MCF 10A (cell line): ENCODE measurements at regions of chr5 and their contacts with region 1.

Region 1: DNA sequence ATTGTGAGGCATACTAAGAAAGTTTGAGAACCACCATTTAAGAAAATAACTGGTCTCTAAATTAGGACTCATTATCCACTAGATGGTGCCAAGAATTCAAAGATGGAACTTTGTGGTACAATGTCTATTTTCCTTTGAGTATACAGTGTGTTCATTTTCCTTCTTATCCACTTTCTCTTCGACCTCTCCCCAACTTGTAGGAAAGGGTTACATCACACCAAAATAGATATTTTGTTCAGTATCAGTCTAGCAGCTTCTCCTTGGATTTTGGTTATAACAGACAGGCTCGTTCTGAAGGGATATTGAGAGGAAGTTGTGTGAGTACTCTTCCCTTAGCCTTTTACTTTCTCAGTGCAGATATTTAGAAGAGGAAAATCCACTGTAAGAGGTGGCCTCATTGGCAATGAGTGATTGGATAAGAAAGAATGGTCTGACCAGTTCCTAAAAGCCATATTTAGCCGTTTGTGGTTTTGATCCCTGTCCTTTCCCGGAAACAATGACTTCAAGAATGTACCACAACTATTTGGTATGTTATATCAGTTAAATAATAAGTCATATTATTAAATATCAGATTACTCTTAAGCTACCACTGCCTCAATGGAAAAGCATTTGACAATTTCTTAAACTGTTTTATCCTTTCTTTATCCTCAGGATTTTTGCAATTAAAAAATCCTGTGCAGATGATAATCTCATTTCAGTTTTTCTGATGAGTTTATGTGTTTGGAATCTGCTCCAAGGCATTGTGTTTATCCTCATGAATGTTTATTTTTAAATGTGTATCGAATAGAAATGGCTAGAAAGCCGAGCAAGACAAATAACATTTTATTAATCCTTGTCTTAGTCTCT is 69.0 kb upstream of the GRAMD2B start:
- DNase-seq: peak; percentile 90
- H3K4me3 Mint-ChIP-seq: peak overlapping the region; percentile 57
- H3K27ac Mint-ChIP-seq: peak overlapping the region; percentile 89
- H3K4me1 Mint-ChIP-seq: peaks cover 29% of the 10 kb centered on the region
- H3K27me3 Mint-ChIP-seq: no peaks in the 10 kb centered on the region
- CTCF ChIP-seq: peak; percentile 84

Region 2: DNA sequence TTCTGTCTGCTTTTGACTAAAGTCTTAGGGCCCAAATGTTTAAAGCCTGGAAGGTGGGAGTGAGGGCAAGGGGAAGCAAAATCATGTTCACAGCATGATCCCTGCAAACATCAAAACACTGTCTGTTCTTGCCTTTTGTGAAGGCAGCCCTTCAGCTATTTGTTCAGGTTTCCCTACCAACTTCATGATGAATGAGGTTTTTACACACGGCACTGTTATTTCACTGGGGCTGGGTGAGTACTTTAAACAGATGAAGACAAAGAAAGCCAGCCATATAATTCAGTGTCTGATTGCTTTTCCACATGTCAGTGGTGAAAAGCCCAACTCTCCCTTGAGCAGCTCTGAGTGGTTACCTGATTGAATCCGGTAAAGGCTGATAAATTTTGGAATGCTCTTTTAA is 155.7 kb before region 1 on chr5:
- CTCF ChIA-PET with region 1: no interaction called
- POLR2A ChIA-PET with region 1: no interaction called
- intact Hi-C with region 1: no loop called
- DNase-seq: no peak
- H3K4me3 Mint-ChIP-seq: no peak overlapping the region
- H3K27ac Mint-ChIP-seq: no peak overlapping the region
- H3K4me1 Mint-ChIP-seq: no peaks in the 10 kb centered on the region
- H3K27me3 Mint-ChIP-seq: no peaks in the 10 kb centered on the region
- CTCF ChIP-seq: no peak

Region 3: DNA sequence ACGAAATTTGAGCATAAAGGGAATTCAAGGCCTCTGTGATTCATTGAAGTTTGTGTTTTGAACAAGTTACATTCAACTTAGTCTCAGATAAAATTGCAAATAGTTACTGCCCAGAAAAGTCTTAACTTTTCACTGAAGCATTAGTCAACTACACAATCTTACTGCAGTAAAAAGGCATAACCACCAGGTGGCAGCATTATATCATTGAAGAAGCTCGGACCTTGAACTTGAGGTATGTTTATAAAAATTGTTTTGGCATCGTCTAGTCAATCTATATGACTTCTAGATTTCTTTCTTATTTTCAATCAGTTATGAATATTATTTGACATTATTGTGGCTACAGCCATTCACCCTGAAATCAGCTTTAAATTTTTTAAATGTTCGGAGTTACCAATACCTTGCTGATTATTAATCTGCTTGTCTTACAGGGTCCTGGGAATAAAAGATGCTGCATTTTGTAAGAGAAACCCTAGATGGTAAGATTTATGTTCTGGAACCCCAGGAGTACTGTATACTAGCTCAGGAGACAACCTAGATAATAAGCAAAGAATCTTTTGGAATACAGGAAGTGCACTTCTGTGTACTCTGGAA is 14.9 kb before region 1 on chr5:
- CTCF ChIA-PET with region 1: interaction called, 62 read pairs
- POLR2A ChIA-PET with region 1: interaction called, 4 read pairs
- intact Hi-C with region 1: no loop called
- DNase-seq: peak; percentile 86
- H3K4me3 Mint-ChIP-seq: no peak overlapping the region
- H3K27ac Mint-ChIP-seq: no peak overlapping the region
- H3K4me1 Mint-ChIP-seq: peaks cover 5% of the 10 kb centered on the region
- H3K27me3 Mint-ChIP-seq: no peaks in the 10 kb centered on the region
- CTCF ChIP-seq: peak; percentile 85

Region 4: DNA sequence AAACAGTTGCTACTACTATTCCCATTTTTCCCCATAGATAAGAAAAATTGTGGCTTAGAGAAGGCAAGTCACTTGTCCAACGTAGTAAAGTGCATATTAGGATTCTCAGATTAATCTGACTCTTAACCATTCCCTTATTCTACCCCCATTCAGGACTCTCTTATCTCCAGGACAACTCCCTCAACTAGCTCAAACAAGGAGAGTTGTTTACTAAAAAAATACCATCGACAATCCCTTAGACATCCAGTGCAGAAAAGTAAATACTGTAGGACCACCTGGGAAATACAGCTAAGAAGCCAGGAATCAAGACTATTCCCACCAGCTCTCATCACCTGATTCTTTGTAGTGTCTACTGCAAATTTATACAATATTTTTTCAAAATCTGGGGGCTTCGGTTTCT is 59.6 kb after region 1 on chr5:
- CTCF ChIA-PET with region 1: no interaction called
- POLR2A ChIA-PET with region 1: no interaction called
- intact Hi-C with region 1: no loop called
- DNase-seq: no peak
- H3K4me3 Mint-ChIP-seq: no peak overlapping the region
- H3K27ac Mint-ChIP-seq: no peak overlapping the region
- H3K4me1 Mint-ChIP-seq: peaks cover 9% of the 10 kb centered on the region
- H3K27me3 Mint-ChIP-seq: no peaks in the 10 kb centered on the region
- CTCF ChIP-seq: no peak

Region 5: DNA sequence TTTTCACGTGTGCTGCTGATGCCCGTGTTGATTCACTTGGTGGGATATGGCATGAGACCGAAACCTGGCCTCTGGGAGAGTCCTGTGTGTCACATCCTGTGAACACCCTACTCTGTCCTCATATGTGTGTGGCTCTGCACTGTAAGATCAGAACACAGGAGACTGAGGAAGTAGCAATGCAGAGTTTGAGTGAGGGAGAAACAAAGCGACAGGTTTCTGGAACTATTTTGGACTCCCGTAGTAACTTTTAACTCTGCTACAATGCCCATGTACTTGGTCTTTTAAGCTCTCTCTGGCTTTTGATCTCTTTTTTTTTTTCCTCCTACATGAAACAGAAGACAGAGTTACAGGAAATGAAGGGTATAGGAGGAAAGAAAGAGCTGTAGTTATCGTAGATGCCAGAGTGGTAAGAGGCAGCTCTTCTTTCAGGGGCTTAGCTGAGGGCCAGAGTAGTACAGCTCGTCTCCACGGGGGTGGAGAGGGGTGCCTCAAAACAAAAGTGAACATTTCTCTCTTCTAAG is 95.6 kb after region 1 on chr5:
- CTCF ChIA-PET with region 1: interaction called, 4 read pairs
- POLR2A ChIA-PET with region 1: interaction called, 6 read pairs
- intact Hi-C with region 1: loop called (anchors 1 kb)
- DNase-seq: peak; percentile 92
- H3K4me3 Mint-ChIP-seq: peak overlapping the region; percentile 68
- H3K27ac Mint-ChIP-seq: peak overlapping the region; percentile 99
- H3K4me1 Mint-ChIP-seq: peaks cover 62% of the 10 kb centered on the region
- H3K27me3 Mint-ChIP-seq: no peaks in the 10 kb centered on the region
- CTCF ChIP-seq: no peak

Region 6: DNA sequence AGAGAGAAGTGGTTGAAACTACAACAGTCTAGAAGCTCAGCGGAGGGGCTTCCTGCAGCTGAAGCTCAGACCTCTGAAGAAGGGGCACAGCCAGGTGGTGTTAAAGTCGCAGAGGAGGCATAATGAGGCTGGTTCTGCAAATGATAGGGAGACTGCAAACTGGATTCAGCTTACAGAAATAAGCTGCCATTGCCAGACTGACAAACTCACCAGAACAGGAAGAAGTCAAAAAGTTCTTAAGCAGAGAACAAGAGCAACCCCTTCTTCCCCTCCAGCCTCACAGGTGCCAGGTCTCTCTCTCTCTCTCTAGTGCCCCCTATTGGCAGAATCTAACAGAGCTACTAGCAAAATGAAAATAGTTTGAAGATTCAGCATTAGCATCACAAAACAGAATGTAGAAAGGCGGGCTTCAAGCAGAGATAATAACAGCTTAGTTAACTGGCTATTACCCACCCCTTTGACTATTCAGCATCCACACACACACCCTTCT is 145.7 kb after region 1 on chr5:
- CTCF ChIA-PET with region 1: interaction called, 15 read pairs
- POLR2A ChIA-PET with region 1: interaction called, 5 read pairs
- intact Hi-C with region 1: no loop called
- DNase-seq: peak; percentile 62
- H3K4me3 Mint-ChIP-seq: no peak overlapping the region
- H3K27ac Mint-ChIP-seq: no peak overlapping the region
- H3K4me1 Mint-ChIP-seq: peaks cover 28% of the 10 kb centered on the region
- H3K27me3 Mint-ChIP-seq: no peaks in the 10 kb centered on the region
- CTCF ChIP-seq: peak; percentile 51

Region 7: GRCh38 chr5:126544087-126544740 is 190.0 kb after region 1 on chr5:
- CTCF ChIA-PET with region 1: interaction called, 318 read pairs
- POLR2A ChIA-PET with region 1: interaction called, 21 read pairs
- intact Hi-C with region 1: loop called (anchors 1 kb)
- DNase-seq: peak; percentile 60
- H3K4me3 Mint-ChIP-seq: no peak overlapping the region
- H3K27ac Mint-ChIP-seq: peak overlapping the region; percentile 33
- H3K4me1 Mint-ChIP-seq: no peaks in the 10 kb centered on the region
- H3K27me3 Mint-ChIP-seq: no peaks in the 10 kb centered on the region
- CTCF ChIP-seq: peak; percentile 63

Region 8: DNA sequence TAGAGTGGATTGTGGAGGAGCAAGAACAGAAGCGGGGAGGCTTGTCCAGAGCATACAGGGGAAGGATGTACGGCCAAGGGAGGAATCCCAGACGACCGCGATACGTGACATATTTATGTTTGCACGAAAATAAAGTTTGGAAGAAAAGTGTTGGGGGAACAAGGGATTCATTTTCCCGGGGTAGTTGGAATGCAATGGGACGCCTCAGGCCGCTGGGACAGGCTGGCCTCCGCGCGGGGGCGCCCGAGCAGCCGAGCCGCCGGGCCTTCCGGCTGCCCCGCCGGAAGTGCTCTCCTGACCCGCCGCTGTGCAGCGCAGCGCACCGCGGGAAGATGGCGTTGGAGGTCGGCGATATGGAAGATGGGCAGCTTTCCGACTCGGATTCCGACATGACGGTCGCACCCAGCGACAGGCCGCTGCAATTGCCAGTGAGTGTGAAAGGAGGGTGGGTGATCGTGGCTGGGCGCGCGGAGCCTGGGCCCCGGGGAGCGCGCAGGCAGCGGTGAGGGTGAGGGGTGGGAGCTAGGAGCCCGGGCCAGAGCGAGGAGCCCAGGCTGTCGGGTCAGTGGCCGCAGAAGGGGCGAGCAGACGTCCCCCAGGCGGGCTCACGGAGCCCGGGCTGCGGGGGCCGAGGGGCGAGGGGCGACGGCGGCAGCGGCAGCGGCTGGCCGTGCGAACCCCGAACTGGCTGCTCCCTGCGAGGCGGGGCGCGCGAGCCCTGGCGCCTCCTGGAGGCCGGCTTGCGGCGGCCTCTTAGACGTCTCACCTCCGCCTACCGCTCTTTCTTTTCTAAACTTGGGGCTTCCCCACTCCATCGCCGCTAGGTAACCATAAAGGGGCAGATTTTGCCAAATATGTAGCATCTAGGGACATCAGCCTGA is 246.6 kb after region 1 on chr5 and contains the start of gene PHAX:
- CTCF ChIA-PET with region 1: interaction called, 16 read pairs
- POLR2A ChIA-PET with region 1: interaction called, 5 read pairs
- intact Hi-C with region 1: loop called (anchors 1 kb)
- DNase-seq: peak; percentile 86
- H3K4me3 Mint-ChIP-seq: peak within 1 kb of the TSS; percentile 86
- H3K27ac Mint-ChIP-seq: peak within 1 kb of the TSS; percentile 83
- H3K4me1 Mint-ChIP-seq: peaks cover 31% of the 10 kb centered on the region
- H3K27me3 Mint-ChIP-seq: no peaks in the 10 kb centered on the region
- CTCF ChIP-seq: peak; percentile 71
- total RNA-seq, gene PHAX: 57.4 and 73.2 TPM in 2 replicates

Region 9: DNA sequence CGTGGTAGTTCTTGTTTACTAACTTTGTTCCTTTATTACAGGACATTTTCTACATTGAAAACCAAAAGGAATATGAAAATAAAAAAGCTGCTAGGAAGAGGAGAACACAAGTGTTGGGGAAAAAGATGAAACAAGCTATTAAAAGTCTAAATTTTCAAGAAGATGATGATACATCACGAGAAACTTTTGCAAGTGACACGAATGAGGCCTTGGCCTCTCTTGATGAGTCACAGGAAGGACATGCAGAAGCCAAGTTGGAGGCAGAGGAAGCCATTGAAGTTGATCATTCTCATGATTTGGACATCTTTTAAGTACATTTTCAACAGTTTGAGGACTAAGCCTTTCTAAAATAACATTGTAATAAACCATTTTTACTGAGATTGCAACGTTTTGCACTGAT is 270.3 kb after region 1 on chr5:
- CTCF ChIA-PET with region 1: no interaction called
- POLR2A ChIA-PET with region 1: no interaction called
- intact Hi-C with region 1: no loop called
- DNase-seq: peak; percentile 82
- H3K4me3 Mint-ChIP-seq: no peak overlapping the region
- H3K27ac Mint-ChIP-seq: peak overlapping the region; percentile 80
- H3K4me1 Mint-ChIP-seq: peaks cover 8% of the 10 kb centered on the region
- H3K27me3 Mint-ChIP-seq: no peaks in the 10 kb centered on the region
- CTCF ChIP-seq: no peak

Region 10: GRCh38 chr5:126857472-126858410 is 503.5 kb after region 1 on chr5:
- CTCF ChIA-PET with region 1: no interaction called
- POLR2A ChIA-PET with region 1: no interaction called
- intact Hi-C with region 1: no loop called
- DNase-seq: no peak
- H3K4me3 Mint-ChIP-seq: no peak overlapping the region
- H3K27ac Mint-ChIP-seq: no peak overlapping the region
- H3K4me1 Mint-ChIP-seq: no peaks in the 10 kb centered on the region
- H3K27me3 Mint-ChIP-seq: no peaks in the 10 kb centered on the region
- CTCF ChIP-seq: no peak